Mammary epithelial cell (primary cell): ENCODE measurements at regions of chr7 and their contacts with region 1.

Region 1: DNA sequence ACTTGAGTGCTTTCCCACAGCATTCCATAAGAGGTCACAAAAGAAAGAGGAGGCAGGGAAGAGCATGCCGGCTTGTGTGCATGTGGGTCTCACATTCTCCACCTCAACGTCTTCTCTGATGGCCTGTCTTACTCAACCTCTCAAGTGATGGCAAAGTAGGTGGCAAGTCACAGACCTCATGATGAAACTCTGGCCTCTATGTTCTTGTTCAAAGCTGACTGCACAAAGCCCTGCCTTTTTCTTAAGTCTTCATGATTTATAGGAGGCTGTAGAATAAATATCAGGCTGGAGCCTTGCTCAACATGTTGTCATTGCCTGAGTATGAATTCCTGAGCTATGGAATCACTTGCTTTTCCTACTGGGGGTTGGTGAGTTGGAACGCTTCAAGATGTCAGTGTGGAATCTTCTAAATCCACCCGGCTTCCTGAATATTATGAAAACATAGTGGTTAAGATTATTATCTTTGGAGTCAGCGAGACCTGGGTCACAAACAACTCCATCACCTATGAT is 213.6 kb upstream of the INHBA start:
- DNase-seq: peak; percentile 89
- H3K4me3 ChIP-seq: no peak overlapping the region
- H3K27ac ChIP-seq: peak overlapping the region; percentile 69
- H3K4me1 ChIP-seq: peaks cover 36% of the 10 kb centered on the region
- H3K27me3 ChIP-seq: no peaks in the 10 kb centered on the region
- CTCF ChIP-seq: no peak

Region 2: GRCh38 chr7:41755096-41755495 is 161.4 kb before region 1 on chr7:
- CTCF ChIA-PET with region 1: no interaction called
- dilution Hi-C with region 1: no loop called
- in situ Hi-C with region 1: no loop called
- intact Hi-C with region 1: loop called (anchors 10 kb)
- DNase-seq: no peak
- H3K4me3 ChIP-seq: no peak overlapping the region
- H3K27ac ChIP-seq: no peak overlapping the region
- H3K4me1 ChIP-seq: no peaks in the 10 kb centered on the region
- H3K27me3 ChIP-seq: no peaks in the 10 kb centered on the region
- CTCF ChIP-seq: no peak